ENCODE measurements at regions of chr7 and their contacts with region 1.

Region 1: DNA sequence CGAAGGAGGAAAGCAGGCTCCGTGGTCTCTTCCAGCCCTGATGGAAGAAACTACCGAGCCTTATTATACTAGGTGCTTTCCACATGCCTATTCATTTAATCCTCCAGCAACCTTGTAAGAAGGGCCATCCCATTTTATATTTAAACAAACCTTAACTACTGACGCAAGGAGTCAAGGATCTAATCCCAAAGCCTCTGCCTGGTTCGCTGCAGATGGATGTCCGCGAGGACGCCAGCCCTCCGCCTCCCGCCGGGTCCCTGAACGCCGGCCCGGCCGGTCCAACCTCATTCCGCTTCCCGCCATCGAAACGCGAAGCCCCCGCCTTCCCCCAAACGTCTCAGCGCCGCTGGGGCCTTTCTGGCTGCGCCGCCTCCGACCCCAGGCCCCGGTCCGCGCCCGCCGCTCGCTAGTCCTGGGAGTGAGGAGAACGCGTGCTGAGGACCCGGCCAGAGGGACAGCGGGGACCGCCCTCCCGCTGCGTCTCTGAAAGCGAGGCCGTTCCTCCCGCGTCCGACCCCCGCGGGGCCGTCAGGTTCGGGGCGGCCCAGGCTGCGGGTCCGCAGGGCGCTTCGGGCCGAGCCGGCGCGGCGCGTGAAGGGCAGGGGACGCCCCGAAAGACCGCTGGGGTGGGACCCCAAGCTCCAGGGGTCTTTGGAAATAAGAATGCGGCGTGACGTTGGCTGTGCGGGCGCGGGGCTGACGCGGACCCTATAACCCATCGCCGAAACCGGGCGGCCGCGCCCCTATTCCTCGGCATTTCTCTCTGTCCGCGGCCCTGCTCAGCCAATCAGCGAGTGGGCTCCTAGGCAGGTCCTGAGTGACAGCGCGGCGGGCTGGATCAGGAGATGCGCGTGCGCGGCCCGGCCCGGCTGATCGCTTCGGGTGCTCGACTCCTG is at the start of gene ATP6V0E2:
- DNase-seq: peak; percentile 81 to 97
- H3K4me3 ChIP-seq: peak within 1 kb of the TSS; percentile 86 to 89
- H3K27ac ChIP-seq: peak within 1 kb of the TSS; percentile 84 to 86
- H3K4me1 ChIP-seq: peaks cover 11% of the 10 kb centered on the region in 2 donors
- H3K27me3 ChIP-seq: no peaks in the 10 kb centered on the region
- CTCF ChIP-seq: no peak
- total RNA-seq, gene ATP6V0E2: 29.5 TPM

Region 2: DNA sequence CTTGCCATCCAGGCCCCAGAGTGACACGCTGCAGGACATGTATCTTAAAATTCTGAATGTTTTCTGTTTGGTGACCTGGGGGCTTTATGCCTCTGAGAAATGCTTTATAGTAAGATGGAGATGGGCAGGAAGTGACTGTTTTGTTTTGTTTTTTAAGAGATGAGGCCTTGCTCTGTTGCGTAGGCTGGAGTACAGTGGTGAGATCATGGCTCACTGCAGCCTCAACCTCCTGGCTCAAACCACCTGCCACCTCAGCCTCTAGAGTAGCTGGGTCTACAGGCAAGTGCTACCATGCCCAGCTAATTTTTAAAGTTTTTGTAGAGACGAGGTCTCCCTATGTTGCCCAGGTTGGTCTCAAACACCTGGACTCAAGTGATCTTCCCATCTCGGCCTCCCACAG is 433.1 kb before region 1 on chr7:
- intact Hi-C with region 1: no loop called
- DNase-seq: no peak
- H3K4me3 ChIP-seq: no peak overlapping the region
- H3K27ac ChIP-seq: no peak overlapping the region
- H3K4me1 ChIP-seq: no peaks in the 10 kb centered on the region
- H3K27me3 ChIP-seq: no peaks in the 10 kb centered on the region
- CTCF ChIP-seq: no peak

Region 3: GRCh38 chr7:149547126-149547525 is 326.2 kb before region 1 on chr7:
- intact Hi-C with region 1: no loop called
- DNase-seq: no peak
- H3K4me3 ChIP-seq: no peak overlapping the region
- H3K27ac ChIP-seq: no peak overlapping the region
- H3K4me1 ChIP-seq: no peaks in the 10 kb centered on the region
- H3K27me3 ChIP-seq: no peaks in the 10 kb centered on the region
- CTCF ChIP-seq: no peak

Region 4: GRCh38 chr7:149771721-149772240 is 101.5 kb before region 1 on chr7:
- intact Hi-C with region 1: loop called (anchors 2 kb)
- DNase-seq: peak; percentile 68 to 93
- H3K4me3 ChIP-seq: peak overlapping the region; percentile 83 to 87
- H3K27ac ChIP-seq: no peak overlapping the region
- H3K4me1 ChIP-seq: peaks cover 5 to 10% of the 10 kb centered on the region in 2 donors
- H3K27me3 ChIP-seq: no peaks in the 10 kb centered on the region
- CTCF ChIP-seq: no peak

Region 5: GRCh38 chr7:150378853-150379440 is 505.6 kb after region 1 on chr7 and contains the start of gene ZNF775:
- intact Hi-C with region 1: loop called (anchors 5 kb)
- DNase-seq: peak; percentile 88 to 98
- H3K4me3 ChIP-seq: peak within 1 kb of the TSS; percentile 61 to 93
- H3K27ac ChIP-seq: peak within 1 kb of the TSS; percentile 79 to 85
- H3K4me1 ChIP-seq: peaks cover 0 to 6% of the 10 kb centered on the region in 2 donors
- H3K27me3 ChIP-seq: no peaks in the 10 kb centered on the region
- CTCF ChIP-seq: no peak
- total RNA-seq, gene ZNF775: 17.1 TPM

Measured in ascending aorta (tissue), 2 donors.